CD4-positive, alpha-beta T cell (primary cell): ENCODE measurements at regions of chr19 and their contacts with region 1.

Region 1: DNA sequence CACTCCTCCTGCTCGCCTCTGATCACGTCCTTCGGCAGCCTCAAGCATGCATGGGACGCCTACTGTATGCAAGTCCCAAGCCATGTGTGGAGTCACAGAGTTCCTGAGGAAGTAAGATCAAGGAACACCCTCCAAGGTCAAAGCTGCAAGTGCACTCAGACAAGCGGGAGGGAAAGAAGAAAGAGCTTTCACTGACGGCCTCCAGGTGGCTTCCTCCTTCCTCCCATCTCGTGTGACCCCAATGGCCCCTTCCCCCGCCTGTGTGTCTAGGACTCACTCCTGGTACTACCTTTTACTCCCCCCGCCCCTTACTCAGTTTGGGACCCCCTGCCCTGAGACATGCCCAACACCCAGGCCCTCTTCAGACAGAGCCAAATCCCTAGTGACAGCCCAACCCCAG is 6.0 kb downstream of the HAUS8 start:
- DNase-seq: no peak
- ATAC-seq: no peak
- H3K4me3 ChIP-seq: no peak overlapping the region
- H3K4me3 Mint-ChIP-seq: no peak overlapping the region
- H3K27ac ChIP-seq: no peak overlapping the region
- H3K27ac Mint-ChIP-seq: no peak overlapping the region
- H3K4me1 ChIP-seq: peaks cover 26% of the 10 kb centered on the region
- H3K4me1 Mint-ChIP-seq: peaks cover 48% of the 10 kb centered on the region
- H3K27me3 ChIP-seq: no peaks in the 10 kb centered on the region
- H3K27me3 Mint-ChIP-seq: no peaks in the 10 kb centered on the region
- CTCF ChIP-seq: no peak

Region 2: DNA sequence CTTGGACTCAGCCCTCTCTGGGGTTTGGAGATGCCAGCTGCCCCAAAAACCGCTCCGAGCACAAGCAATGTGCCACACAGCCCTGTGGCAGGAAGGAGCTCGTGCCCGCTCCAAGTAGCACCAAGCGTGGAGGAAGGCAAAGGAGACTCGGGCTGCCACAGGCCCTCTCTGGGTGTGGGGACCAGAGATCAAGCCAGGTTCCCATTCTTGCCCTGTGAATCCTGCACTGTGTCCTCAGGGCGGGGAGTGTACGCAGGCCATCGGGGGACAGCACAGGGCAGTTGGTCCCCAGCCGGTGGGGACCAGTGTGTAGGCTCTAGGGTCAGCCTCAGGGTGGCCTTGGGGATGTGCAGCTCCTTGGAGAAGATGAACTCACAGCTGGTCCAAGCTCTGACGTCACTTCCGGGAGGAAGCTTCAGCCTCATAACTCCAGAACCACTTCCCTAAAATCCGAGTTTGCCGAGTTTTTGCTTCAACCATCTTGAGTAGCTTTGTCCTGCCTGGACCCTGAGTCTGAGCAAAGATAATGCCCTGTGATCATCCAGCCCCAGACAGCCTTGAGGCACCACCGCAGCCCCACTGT is 33.3 kb before region 1 on chr19:
- CTCF ChIA-PET with region 1: no interaction called
- POLR2A ChIA-PET with region 1: no interaction called
- intact Hi-C with region 1: no loop called
- DNase-seq: peak in 3 of 14 experiments; percentile 12 to 70 (median 66)
- ATAC-seq: no peak
- H3K4me3 ChIP-seq: no peak overlapping the region
- H3K4me3 Mint-ChIP-seq: no peak overlapping the region
- H3K27ac ChIP-seq: no peak overlapping the region
- H3K27ac Mint-ChIP-seq: no peak overlapping the region
- H3K4me1 ChIP-seq: no peaks in the 10 kb centered on the region
- H3K4me1 Mint-ChIP-seq: no peaks in the 10 kb centered on the region
- H3K27me3 ChIP-seq: no peaks in the 10 kb centered on the region
- H3K27me3 Mint-ChIP-seq: peaks cover 31% of the 10 kb centered on the region
- CTCF ChIP-seq: no peak

Region 3: DNA sequence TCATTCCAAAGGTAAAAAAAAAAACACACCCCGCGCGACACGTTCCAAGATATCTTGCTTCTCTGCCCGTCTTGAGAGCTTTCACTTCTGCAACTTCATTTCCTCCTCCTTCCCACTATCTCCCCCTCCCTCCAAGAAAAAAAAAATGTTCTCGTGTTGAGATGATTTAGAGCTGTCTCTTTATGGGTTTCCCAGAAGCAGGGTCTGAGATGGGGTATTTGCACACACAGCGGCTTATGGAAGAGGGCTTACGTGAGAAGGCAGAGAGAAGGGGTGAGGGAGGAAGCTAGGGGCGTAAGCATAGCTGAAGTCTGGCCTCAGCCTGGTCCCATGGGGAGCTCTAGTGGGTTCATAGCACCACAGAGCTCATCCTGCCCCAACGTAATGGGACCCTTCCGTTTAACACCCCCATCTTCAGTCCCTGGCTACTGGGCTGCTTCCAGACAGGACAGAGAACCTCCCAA is 114.7 kb after region 1 on chr19:
- CTCF ChIA-PET with region 1: interaction called, 6 read pairs
- POLR2A ChIA-PET with region 1: interaction called, 6 read pairs
- intact Hi-C with region 1: loop called (anchors 1 to 5 kb)
- DNase-seq: peak in 6 of 14 experiments; percentile 7 to 63 (median 46)
- ATAC-seq: peak; percentile 57
- H3K4me3 ChIP-seq: peak overlapping the region; percentile 41
- H3K4me3 Mint-ChIP-seq: peak overlapping the region; percentile 83
- H3K27ac ChIP-seq: peak overlapping the region; percentile 46 to 82
- H3K27ac Mint-ChIP-seq: peak overlapping the region; percentile 89
- H3K4me1 ChIP-seq: peaks cover 35% of the 10 kb centered on the region
- H3K4me1 Mint-ChIP-seq: peaks cover 19% of the 10 kb centered on the region
- H3K27me3 ChIP-seq: no peaks in the 10 kb centered on the region
- H3K27me3 Mint-ChIP-seq: no peaks in the 10 kb centered on the region
- CTCF ChIP-seq: no peak

Region 4: GRCh38 chr19:17235618-17236377 is 166.6 kb after region 1 on chr19:
- CTCF ChIA-PET with region 1: no interaction called
- POLR2A ChIA-PET with region 1: interaction called, 6 read pairs
- intact Hi-C with region 1: loop called (anchors 2 kb)
- DNase-seq: peak; percentile 57 to 92 (median 73)
- ATAC-seq: peak; percentile 92
- H3K4me3 ChIP-seq: peak overlapping the region; percentile 87
- H3K4me3 Mint-ChIP-seq: peak overlapping the region; percentile 87
- H3K27ac ChIP-seq: no peak overlapping the region
- H3K27ac Mint-ChIP-seq: no peak overlapping the region
- H3K4me1 ChIP-seq: peaks cover 22% of the 10 kb centered on the region
- H3K4me1 Mint-ChIP-seq: peaks cover 6% of the 10 kb centered on the region
- H3K27me3 ChIP-seq: no peaks in the 10 kb centered on the region
- H3K27me3 Mint-ChIP-seq: no peaks in the 10 kb centered on the region
- CTCF ChIP-seq: peak; percentile 67

Region 5: DNA sequence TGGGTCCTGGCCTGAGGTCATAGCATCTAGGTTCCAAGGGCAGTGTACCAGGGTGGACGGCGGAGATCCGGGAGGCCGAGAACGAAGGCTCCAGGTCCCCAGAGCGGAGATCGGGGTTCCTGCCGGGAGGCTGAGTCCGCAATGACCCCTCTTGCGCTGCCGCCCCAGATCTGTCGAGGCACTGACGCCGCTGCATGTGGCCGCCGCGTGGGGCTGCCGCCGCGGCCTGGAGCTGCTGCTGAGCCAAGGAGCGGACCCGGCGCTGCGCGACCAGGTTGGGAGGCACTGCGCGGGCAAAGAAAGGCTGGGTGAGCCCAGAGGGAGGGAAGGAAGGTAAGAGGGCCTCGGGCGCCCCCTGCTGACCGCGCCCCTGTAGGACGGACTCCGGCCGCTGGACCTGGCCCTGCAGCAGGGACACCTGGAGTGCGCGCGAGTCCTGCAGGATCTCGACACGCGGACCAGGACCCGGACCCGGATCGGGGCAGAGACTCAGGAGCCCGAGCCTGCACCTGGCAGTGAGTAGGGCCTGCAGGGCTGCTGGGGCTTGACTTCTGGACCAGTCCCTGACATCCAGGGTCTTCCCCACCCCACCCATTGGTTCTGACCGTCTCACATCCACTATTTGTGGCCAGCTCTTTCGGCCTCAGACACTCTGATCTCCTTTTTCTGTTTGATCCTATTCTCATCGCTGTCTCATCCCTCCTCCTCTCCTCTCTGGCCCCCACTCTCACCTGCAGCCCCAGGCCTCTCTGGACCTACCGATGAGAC is 213.5 kb after region 1 on chr19:
- CTCF ChIA-PET with region 1: interaction called, 3 read pairs
- POLR2A ChIA-PET with region 1: no interaction called
- intact Hi-C with region 1: loop called (anchors 1 kb)
- DNase-seq: peak; percentile 58 to 89 (median 74)
- ATAC-seq: peak; percentile 96
- H3K4me3 ChIP-seq: peak overlapping the region; percentile 51
- H3K4me3 Mint-ChIP-seq: peak overlapping the region; percentile 63
- H3K27ac ChIP-seq: no peak overlapping the region
- H3K27ac Mint-ChIP-seq: no peak overlapping the region
- H3K4me1 ChIP-seq: peaks cover 20% of the 10 kb centered on the region
- H3K4me1 Mint-ChIP-seq: peaks cover 10% of the 10 kb centered on the region
- H3K27me3 ChIP-seq: peaks cover 0 to 5% of the 10 kb centered on the region in 2 experiments
- H3K27me3 Mint-ChIP-seq: peaks cover 11% of the 10 kb centered on the region
- CTCF ChIP-seq: peak; percentile 97

Region 6: GRCh38 chr19:17390665-17391370 is 321.6 kb after region 1 on chr19:
- CTCF ChIA-PET with region 1: no interaction called
- POLR2A ChIA-PET with region 1: no interaction called
- intact Hi-C with region 1: loop called in 1 of 2 experiments (anchors 10 kb)
- DNase-seq: peak; percentile 83 to 95 (median 87)
- ATAC-seq: peak; percentile 99
- H3K4me3 ChIP-seq: peak overlapping the region; percentile 74
- H3K4me3 Mint-ChIP-seq: peak overlapping the region; percentile 93
- H3K27ac ChIP-seq: no peak overlapping the region
- H3K27ac Mint-ChIP-seq: no peak overlapping the region
- H3K4me1 ChIP-seq: peaks cover 32% of the 10 kb centered on the region
- H3K4me1 Mint-ChIP-seq: peaks cover 23% of the 10 kb centered on the region
- H3K27me3 ChIP-seq: no peaks in the 10 kb centered on the region
- H3K27me3 Mint-ChIP-seq: no peaks in the 10 kb centered on the region
- CTCF ChIP-seq: peak; percentile 67

Region 7: GRCh38 chr19:17460372-17461230 is 391.4 kb after region 1 on chr19 and contains the start of gene NXNL1:
- CTCF ChIA-PET with region 1: no interaction called
- POLR2A ChIA-PET with region 1: no interaction called
- intact Hi-C with region 1: no loop called
- DNase-seq: no peak
- ATAC-seq: no peak
- H3K4me3 ChIP-seq: no peak within 1 kb of the TSS
- H3K4me3 Mint-ChIP-seq: no peak within 1 kb of the TSS
- H3K27ac ChIP-seq: no peak within 1 kb of the TSS
- H3K27ac Mint-ChIP-seq: no peak within 1 kb of the TSS
- H3K4me1 ChIP-seq: peaks cover 4% of the 10 kb centered on the region
- H3K4me1 Mint-ChIP-seq: peaks cover 4% of the 10 kb centered on the region
- H3K27me3 ChIP-seq: peaks cover 20 to 28% of the 10 kb centered on the region in 2 experiments
- H3K27me3 Mint-ChIP-seq: peaks cover 34% of the 10 kb centered on the region
- CTCF ChIP-seq: no peak
- total RNA-seq, gene NXNL1: not detected